ENCODE measurements at regions of chr21 and their contacts with region 1.

Region 1: GRCh38 chr21:21888931-21889330 is 890.7 kb downstream of the NCAM2 start:
- DNase-seq: no peak
- ATAC-seq: no peak
- H3K4me3 ChIP-seq: no peak overlapping the region
- H3K27ac ChIP-seq: no peak overlapping the region
- H3K4me1 ChIP-seq: no peaks in the 10 kb centered on the region
- H3K27me3 ChIP-seq: no peaks in the 10 kb centered on the region
- CTCF ChIP-seq: no peak
- POLR2A ChIP-seq: no peak
- RAD21 ChIP-seq: no peak

Region 2: GRCh38 chr21:21831036-21831435 is 57.9 kb before region 1 on chr21:
- CTCF ChIA-PET with region 1: no interaction called
- POLR2A ChIA-PET with region 1: no interaction called
- dilution Hi-C with region 1: no loop called
- in situ Hi-C with region 1: no loop called
- intact Hi-C with region 1: loop called (anchors 2 kb)
- DNase-seq: no peak
- ATAC-seq: no peak
- H3K4me3 ChIP-seq: no peak overlapping the region
- H3K27ac ChIP-seq: no peak overlapping the region
- H3K4me1 ChIP-seq: no peaks in the 10 kb centered on the region
- H3K27me3 ChIP-seq: no peaks in the 10 kb centered on the region
- CTCF ChIP-seq: no peak
- POLR2A ChIP-seq: no peak
- RAD21 ChIP-seq: no peak